Right ventricle myocardium inferior (tissue), 1 donor: ENCODE measurements at regions of chr2 and their contacts with region 1.

Region 1: GRCh38 chr2:217510771-217511291 is 492.0 kb downstream of the TNS1 start:
- DNase-seq: no peak
- ATAC-seq: peak; percentile 84

Region 2: DNA sequence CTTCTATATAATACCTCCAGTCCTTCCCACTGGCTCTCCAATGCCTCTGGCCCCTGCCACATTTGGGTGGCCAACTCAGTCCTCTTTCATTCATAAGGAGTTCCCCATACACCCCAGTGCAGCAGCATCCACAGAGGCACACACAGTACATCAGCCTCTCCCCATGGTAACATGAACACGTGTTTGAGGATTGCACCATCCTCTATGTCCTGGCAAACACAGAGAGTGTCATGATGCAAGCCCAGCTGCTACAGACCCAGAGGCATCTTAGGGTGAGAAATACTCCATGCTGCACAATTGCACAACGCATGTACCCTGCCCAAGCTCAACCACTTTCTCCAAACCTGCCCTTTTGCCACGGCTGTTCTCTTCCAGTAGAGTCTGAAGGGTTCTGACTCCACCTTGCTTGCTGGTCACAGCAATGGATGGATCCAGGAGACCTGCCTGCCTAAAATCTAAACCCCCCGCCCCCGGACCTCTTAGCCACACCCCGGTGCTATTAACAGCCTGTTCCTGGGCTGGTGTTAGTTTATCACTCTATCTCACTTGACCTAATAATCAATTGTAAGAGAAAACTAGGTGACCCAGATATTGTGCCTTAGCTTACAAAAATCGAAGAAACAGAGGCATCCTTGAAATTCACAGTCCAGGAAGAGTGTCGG is 826.9 kb before region 1 on chr2:
- intact Hi-C with region 1: loop called (anchors 2 kb)
- DNase-seq: peak; percentile 64
- ATAC-seq: peak; percentile 77

Region 3: DNA sequence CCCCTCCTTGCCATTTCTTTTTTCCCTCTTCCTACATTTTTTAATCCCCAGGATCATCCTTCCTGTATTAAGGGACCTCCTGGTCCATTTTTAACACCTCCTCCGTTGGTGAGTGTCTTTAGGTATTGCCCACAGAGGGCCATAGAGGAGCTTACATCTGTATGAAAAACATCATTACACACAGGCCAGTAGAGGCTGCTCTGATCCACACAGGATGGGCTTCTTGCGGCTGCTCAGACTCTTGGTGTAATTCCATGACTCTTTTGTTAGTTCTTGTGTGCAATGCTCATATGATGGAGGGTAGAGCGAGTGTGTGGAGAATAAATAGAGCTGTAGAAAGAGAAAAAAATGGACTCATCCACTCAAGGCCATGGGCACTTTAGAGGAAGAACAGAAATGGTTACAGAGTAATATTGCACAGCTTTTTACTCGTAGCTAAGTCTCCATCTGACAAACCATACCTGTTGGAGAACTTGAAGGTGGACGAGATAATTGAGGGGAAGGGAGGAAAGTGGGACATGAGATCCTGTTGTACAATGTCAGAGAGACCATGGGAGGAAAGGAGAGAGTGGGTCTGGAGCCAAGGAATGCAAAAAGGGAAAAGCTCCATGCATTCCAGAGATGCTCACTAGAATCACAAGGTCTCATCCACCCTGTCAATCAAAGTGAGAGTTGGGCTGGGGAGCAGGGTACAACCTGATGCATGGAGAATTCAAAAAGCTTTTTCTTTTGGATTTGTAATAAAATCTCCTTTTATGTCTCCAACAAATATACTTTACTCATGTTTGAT is 521.3 kb before region 1 on chr2:
- intact Hi-C with region 1: loop called (anchors 10 kb)
- DNase-seq: no peak
- ATAC-seq: no peak

Region 4: GRCh38 chr2:217177720-217178119 is 333.1 kb before region 1 on chr2:
- intact Hi-C with region 1: loop called (anchors 5 kb)
- DNase-seq: no peak
- ATAC-seq: no peak